Motor neuron (in vitro differentiated cells): ENCODE measurements at regions of chr2 and their contacts with region 1.

Region 1: DNA sequence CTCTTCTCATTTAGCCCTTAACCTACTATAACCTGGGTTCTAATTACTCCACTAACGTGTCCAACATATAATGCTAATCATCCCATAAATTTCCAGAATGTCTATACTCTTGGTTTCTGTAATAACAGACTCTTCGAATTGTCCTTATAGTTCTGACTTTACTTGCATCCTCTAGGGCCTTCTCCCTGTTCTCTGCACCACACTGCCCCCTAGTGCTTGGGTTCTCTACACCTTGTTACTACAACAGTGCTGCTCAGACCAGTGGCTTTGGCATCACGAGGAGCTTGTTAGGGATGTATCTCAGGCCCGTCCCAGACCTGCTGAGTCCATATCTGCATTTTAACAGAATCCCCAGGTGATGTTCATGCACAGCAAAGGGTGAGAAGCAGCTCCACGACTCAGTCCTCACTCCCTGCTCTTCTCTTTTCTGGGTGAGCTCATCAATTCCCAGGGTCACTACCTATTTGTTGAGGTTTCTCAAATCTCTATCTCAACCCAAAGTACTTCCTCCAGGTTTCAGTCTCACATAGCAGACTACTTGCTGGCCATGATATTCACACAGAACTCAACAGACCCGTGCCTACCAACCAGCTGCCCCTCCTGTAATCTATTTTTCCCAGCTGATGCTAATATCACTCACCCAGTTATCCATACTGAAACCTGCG is 14.5 kb upstream of the DDX1 start:
- ATAC-seq: peak; percentile 87 to 100 (median 99)
- H3K4me3 ChIP-seq: no peak overlapping the region
- H3K27ac ChIP-seq: no peak overlapping the region
- H3K4me1 ChIP-seq: peaks cover 4 to 7% of the 10 kb centered on the region in 2 donors

Region 2: DNA sequence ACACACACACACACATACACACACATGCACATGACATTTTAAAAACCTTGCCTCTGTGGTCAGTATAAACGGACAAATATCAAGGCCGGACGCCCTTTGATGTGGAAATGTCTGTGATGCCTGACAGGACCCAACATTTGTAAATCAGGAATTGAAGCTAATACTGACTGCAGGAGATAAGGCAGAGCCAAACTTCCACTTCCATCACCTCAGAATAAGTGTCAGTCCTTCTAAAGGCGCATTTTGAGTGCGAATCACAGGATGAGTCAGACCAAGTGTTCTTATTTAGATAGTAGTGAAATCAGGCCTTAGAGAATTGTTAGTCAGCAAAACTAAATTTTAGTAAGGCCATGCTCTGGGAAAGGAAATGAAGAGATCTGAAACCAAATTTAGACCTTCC is 1156.4 kb before region 1 on chr2:
- in situ Hi-C with region 1: loop called in 1 of 9 experiments (anchors 25 kb)
- ATAC-seq: peak in 2 of 8 experiments; percentile 40 to 82
- H3K4me3 ChIP-seq: no peak overlapping the region
- H3K27ac ChIP-seq: no peak overlapping the region
- H3K4me1 ChIP-seq: no peaks in the 10 kb centered on the region

Region 3: DNA sequence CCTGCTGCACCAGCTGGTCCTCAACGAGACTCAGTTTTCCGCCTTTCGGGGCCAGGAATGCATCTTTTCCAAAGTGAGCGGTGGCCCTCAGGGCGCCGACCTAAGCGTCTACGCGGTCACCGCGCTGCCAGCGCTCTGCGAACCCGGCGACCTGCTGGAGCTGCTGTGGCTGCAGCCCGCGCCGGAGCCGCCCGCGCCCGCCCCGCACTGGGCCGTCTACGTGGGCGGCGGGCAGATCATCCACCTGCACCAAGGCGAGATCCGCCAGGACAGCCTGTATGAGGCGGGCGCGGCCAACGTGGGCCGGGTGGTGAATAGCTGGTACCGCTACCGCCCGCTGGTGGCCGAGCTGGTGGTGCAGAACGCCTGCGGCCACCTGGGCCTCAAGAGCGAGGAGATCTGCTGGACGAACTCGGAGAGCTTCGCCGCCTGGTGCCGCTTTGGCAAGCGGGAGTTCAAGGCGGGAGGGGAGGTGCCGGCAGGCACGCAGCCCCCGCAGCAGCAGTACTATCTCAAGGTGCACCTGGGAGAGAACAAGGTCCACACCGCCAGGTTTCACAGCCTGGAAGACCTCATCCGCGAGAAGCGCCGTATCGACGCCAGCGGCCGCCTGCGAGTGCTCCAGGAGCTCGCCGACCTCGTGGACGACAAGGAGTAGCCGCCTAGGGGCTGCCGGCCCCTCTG is 942.9 kb before region 1 on chr2:
- in situ Hi-C with region 1: loop called in 2 of 9 experiments (anchors 25 kb)
- ATAC-seq: peak; percentile 30 to 65 (median 55)
- H3K4me3 ChIP-seq: peak overlapping the region; percentile 48 to 70 (median 55)
- H3K27ac ChIP-seq: peak overlapping the region; percentile 35 to 67
- H3K4me1 ChIP-seq: peaks cover 6 to 7% of the 10 kb centered on the region in 2 donors

Region 4: GRCh38 chr2:14903709-14904374 is 673.4 kb before region 1 on chr2:
- in situ Hi-C with region 1: loop called in 1 of 9 experiments (anchors 25 kb)
- ATAC-seq: peak in 2 of 8 experiments; percentile 53 to 89
- H3K4me3 ChIP-seq: no peak overlapping the region
- H3K27ac ChIP-seq: no peak overlapping the region
- H3K4me1 ChIP-seq: peaks cover 3 to 7% of the 10 kb centered on the region in 2 donors

Region 5: DNA sequence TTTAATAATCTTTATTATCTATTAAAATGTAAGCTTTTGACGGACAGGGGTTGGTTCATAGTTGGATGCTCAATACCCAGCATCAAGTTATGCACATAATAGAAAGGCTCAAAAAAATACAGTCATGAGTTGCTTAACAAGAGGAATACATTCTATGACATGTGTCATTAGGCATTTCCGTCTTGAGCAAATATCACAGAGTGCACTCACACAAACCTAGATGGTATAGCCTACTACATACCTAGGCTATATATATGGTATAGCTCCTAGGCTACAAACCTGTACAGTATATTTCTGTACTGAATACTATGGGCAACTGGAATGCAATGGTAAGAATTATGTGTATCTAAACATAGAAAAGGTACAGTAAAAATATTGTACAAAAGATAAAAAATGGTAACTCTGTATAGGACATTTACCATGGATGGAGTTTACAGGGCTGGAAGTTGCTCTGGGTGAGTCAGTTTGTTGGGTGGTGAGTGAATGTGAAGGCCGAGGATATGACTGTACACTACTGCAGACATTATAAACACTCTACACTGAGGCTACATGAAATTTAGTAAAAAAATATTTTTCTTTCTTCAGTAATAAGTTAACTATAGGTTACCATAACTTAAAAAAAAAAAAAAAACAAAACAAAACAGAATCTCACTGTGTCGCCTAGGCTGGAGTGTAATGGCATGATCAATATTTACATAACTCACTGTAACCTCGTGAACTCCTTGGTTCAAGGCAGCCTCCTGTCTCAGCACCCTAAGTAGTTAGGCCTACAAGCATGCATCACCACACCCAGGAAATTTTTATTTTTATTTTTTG is 217.3 kb before region 1 on chr2:
- in situ Hi-C with region 1: loop called in 1 of 9 experiments (anchors 25 kb)
- ATAC-seq: peak in 3 of 8 experiments; percentile 53 to 85 (median 84)
- H3K4me3 ChIP-seq: no peak overlapping the region
- H3K27ac ChIP-seq: no peak overlapping the region
- H3K4me1 ChIP-seq: no peaks in the 10 kb centered on the region